ENCODE measurements at regions of chr15 and their contacts with region 1.

Region 1: DNA sequence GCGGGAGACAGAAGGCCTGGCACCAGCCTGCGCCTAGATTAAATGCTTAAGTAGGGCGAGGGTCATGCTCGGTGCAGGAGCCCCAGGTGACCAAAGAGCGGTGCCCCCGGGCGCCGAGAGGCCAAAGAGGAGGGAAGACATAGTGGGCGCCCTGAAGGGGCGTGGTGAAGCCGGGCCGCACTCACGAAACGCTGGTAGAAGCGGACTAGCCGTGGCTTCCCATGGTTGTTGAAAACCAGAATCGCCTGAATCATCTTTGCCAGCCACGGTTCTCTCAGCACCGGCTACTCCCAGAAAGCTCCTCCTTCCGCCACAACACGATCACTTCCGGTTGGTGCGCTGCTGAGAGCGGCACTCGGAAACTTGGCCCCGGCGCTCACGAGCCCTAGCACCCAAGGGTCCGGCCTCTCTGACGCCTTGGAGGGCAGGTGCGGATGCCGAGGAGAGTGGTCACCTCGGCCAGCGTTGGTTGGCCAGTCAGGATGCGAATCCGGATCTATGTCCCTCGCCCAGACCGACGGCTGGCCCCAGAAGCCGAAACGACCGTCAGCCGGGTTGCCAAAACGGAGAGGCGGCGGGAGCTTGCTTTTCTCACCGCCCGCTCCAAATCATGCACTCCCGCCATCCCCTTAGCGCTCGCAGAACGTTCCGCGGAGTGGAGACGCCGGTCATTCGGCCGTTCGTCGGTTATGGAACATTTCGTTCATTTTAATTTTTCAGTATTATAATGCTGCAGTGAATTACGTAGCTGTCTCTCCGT is at the start of gene AP3S2:
- DNase-seq: peak; percentile 96
- H3K4me3 ChIP-seq: peak within 1 kb of the TSS; percentile 83 to 93 (median 91)
- H3K27ac ChIP-seq: peak within 1 kb of the TSS; percentile 92
- H3K4me1 ChIP-seq: peaks cover 6% of the 10 kb centered on the region
- H3K27me3 ChIP-seq: no peaks in the 10 kb centered on the region
- CTCF ChIP-seq: no peak
- total RNA-seq, gene AP3S2: 34.6 to 53.0 TPM

Region 2: GRCh38 chr15:89812011-89812835 is 81.7 kb before region 1 on chr15:
- CTCF ChIA-PET with region 1: no interaction called
- dilution Hi-C with region 1: no loop called
- in situ Hi-C with region 1: no loop called
- intact Hi-C with region 1: no loop called
- DNase-seq: no peak
- H3K4me3 ChIP-seq: no peak overlapping the region
- H3K27ac ChIP-seq: no peak overlapping the region
- H3K4me1 ChIP-seq: peaks cover 6% of the 10 kb centered on the region
- H3K27me3 ChIP-seq: no peaks in the 10 kb centered on the region
- CTCF ChIP-seq: no peak

Region 3: DNA sequence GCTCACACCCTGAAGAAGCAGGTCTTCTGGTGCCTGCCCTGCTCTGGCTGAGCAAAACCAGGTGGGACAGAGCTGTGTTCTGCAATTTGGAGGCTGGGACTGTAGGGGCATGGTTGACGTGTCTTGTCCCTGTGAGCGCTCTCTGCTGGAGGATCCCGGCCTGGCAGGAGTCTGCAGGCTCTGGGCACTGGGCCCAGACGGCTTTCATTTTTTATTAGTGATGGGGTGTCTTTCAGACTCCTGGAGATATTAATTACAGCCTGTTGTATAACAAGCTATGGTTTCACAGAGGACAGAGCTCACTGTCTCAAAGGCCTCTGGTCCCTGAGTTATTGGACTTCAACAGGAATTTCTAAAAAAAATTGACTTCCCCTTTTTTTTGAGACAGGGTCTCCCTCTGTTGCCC is 77.7 kb after region 1 on chr15:
- CTCF ChIA-PET with region 1: no interaction called
- dilution Hi-C with region 1: no loop called
- in situ Hi-C with region 1: no loop called
- intact Hi-C with region 1: loop called (anchors 1 kb)
- DNase-seq: peak; percentile 39
- H3K4me3 ChIP-seq: no peak overlapping the region
- H3K27ac ChIP-seq: no peak overlapping the region
- H3K4me1 ChIP-seq: no peaks in the 10 kb centered on the region
- H3K27me3 ChIP-seq: no peaks in the 10 kb centered on the region
- CTCF ChIP-seq: peak; percentile 60

Region 4: DNA sequence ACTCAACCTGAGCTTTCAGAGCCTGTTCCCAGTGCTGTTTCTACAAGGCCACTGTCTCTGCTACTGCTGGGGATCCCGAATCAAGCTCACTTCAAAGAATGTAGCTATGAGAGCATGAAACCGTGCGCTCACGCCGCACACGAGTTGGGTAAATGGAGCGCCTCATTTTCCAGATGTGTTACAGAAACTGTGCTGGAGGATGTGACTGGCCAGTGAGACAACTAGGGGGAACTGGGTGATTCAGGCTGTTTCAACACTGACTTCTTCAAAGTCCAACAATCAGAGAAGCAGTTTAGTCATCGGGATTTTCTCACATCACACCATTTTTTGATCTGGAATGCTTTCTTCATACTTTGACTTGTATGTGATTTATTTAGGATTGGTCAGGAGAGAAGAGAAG is 110.8 kb after region 1 on chr15:
- CTCF ChIA-PET with region 1: no interaction called
- dilution Hi-C with region 1: no loop called
- in situ Hi-C with region 1: no loop called
- intact Hi-C with region 1: loop called (anchors 2 kb)
- DNase-seq: peak; percentile 97
- H3K4me3 ChIP-seq: no peak overlapping the region
- H3K27ac ChIP-seq: peak overlapping the region; percentile 90
- H3K4me1 ChIP-seq: peaks cover 49% of the 10 kb centered on the region
- H3K27me3 ChIP-seq: no peaks in the 10 kb centered on the region
- CTCF ChIP-seq: no peak

Region 5: DNA sequence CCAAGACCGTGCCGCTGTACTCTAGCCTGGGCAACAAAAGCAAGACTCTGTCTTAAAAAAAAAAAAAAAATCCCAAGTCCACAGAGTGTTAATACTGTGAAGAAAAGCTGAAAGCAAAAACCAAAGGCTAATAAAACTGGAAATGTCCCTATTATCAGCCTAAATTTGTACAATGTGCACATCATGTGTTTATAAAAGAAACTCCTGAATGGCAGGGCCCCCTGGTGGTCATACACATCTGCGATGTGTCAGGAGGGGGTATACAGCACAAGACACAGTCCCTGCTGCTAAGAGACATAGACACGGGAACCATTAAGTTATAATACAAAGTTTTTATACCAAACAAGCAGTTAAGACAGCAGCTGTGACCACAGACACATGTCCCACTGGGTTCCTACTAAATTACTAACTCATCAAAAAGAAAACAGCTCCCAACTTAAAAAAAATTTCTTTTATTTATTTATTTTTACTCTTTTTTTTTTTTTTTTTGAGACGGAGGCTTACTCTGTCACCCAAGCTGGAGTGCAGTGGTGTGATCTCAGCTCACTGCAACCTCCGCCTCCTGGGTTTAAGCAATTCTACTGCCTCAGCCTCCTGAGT is 177.4 kb after region 1 on chr15:
- CTCF ChIA-PET with region 1: interaction called, 8 read pairs
- dilution Hi-C with region 1: no loop called
- in situ Hi-C with region 1: loop called in 1 of 2 experiments (anchors 5 kb)
- intact Hi-C with region 1: loop called (anchors 1 kb)
- DNase-seq: peak; percentile 62
- H3K4me3 ChIP-seq: no peak overlapping the region
- H3K27ac ChIP-seq: no peak overlapping the region
- H3K4me1 ChIP-seq: peaks cover 18% of the 10 kb centered on the region
- H3K27me3 ChIP-seq: no peaks in the 10 kb centered on the region
- CTCF ChIP-seq: peak; percentile 70 to 74

Region 6: GRCh38 chr15:90201130-90201949 is 307.5 kb after region 1 on chr15 and contains the start of gene SEMA4B:
- CTCF ChIA-PET with region 1: no interaction called
- dilution Hi-C with region 1: no loop called
- in situ Hi-C with region 1: loop called in 1 of 2 experiments (anchors 10 kb)
- intact Hi-C with region 1: no loop called
- DNase-seq: peak; percentile 57
- H3K4me3 ChIP-seq: peak within 1 kb of the TSS; percentile 92 to 95 (median 92)
- H3K27ac ChIP-seq: peak within 1 kb of the TSS; percentile 40
- H3K4me1 ChIP-seq: peaks cover 23% of the 10 kb centered on the region
- H3K27me3 ChIP-seq: no peaks in the 10 kb centered on the region
- CTCF ChIP-seq: no peak
- total RNA-seq, gene SEMA4B: 44.3 to 108 TPM

Measured in mammary epithelial cell (primary cell).